T-cell (primary cell): ENCODE measurements at regions of chr5 and their contacts with region 1.

Region 1: GRCh38 chr5:126600631-126601511 is at the start of gene PHAX:
- DNase-seq: peak; percentile 48 to 84 (median 67)
- ATAC-seq: peak; percentile 92 to 96 (median 94)
- H3K4me3 ChIP-seq: peak within 1 kb of the TSS; percentile 79 to 90
- H3K4me3 Mint-ChIP-seq: peak within 1 kb of the TSS; percentile 87 to 97 (median 94)
- H3K27ac ChIP-seq: peak within 1 kb of the TSS; percentile 76
- H3K27ac Mint-ChIP-seq: peak within 1 kb of the TSS; percentile 94 to 95
- H3K4me1 ChIP-seq: peaks cover 2 to 34% of the 10 kb centered on the region in 2 experiments
- H3K4me1 Mint-ChIP-seq: peaks cover 22 to 38% (median 37%) of the 10 kb centered on the region in 3 donors
- H3K27me3 ChIP-seq: no peaks in the 10 kb centered on the region
- H3K27me3 Mint-ChIP-seq: peaks cover 0 to 2% of the 10 kb centered on the region in 2 donors
- total RNA-seq, gene PHAX: 19.7 to 37.3 (median 30.3) TPM

Region 2: GRCh38 chr5:126443374-126443851 is 157.5 kb before region 1 on chr5:
- CTCF ChIA-PET with region 1: no interaction called
- POLR2A ChIA-PET with region 1: no interaction called
- DNase-seq: no peak
- ATAC-seq: peak in 1 of 4 experiments; percentile 31
- H3K4me3 ChIP-seq: no peak overlapping the region
- H3K4me3 Mint-ChIP-seq: peak overlapping the region in 1 of 3 donors; percentile 46
- H3K27ac ChIP-seq: no peak overlapping the region
- H3K27ac Mint-ChIP-seq: peak overlapping the region; percentile 69 to 80
- H3K4me1 ChIP-seq: peaks cover 7 to 20% of the 10 kb centered on the region in 2 experiments
- H3K4me1 Mint-ChIP-seq: peaks cover 49 to 57% (median 50%) of the 10 kb centered on the region in 3 donors
- H3K27me3 ChIP-seq: no peaks in the 10 kb centered on the region
- H3K27me3 Mint-ChIP-seq: no peaks in the 10 kb centered on the region

Region 3: GRCh38 chr5:126562823-126563222 is 38.0 kb before region 1 on chr5:
- CTCF ChIA-PET with region 1: interaction called, 3 to 14 read pairs
- POLR2A ChIA-PET with region 1: no interaction called
- DNase-seq: no peak
- ATAC-seq: no peak
- H3K4me3 ChIP-seq: no peak overlapping the region
- H3K4me3 Mint-ChIP-seq: no peak overlapping the region
- H3K27ac ChIP-seq: no peak overlapping the region
- H3K27ac Mint-ChIP-seq: no peak overlapping the region
- H3K4me1 ChIP-seq: no peaks in the 10 kb centered on the region
- H3K4me1 Mint-ChIP-seq: no peaks in the 10 kb centered on the region
- H3K27me3 ChIP-seq: no peaks in the 10 kb centered on the region
- H3K27me3 Mint-ChIP-seq: no peaks in the 10 kb centered on the region

Region 4: GRCh38 chr5:126659805-126660482 is 59.1 kb after region 1 on chr5:
- CTCF ChIA-PET with region 1: no interaction called
- POLR2A ChIA-PET with region 1: no interaction called
- DNase-seq: no peak
- ATAC-seq: no peak
- H3K4me3 ChIP-seq: no peak overlapping the region
- H3K4me3 Mint-ChIP-seq: no peak overlapping the region
- H3K27ac ChIP-seq: no peak overlapping the region
- H3K27ac Mint-ChIP-seq: no peak overlapping the region
- H3K4me1 ChIP-seq: no peaks in the 10 kb centered on the region
- H3K4me1 Mint-ChIP-seq: no peaks in the 10 kb centered on the region
- H3K27me3 ChIP-seq: no peaks in the 10 kb centered on the region
- H3K27me3 Mint-ChIP-seq: peaks cover 1 to 2% of the 10 kb centered on the region in 2 donors